Posterior vena cava (tissue), 2 donors: ENCODE measurements at regions of chr3 and their contacts with region 1.

Region 1: DNA sequence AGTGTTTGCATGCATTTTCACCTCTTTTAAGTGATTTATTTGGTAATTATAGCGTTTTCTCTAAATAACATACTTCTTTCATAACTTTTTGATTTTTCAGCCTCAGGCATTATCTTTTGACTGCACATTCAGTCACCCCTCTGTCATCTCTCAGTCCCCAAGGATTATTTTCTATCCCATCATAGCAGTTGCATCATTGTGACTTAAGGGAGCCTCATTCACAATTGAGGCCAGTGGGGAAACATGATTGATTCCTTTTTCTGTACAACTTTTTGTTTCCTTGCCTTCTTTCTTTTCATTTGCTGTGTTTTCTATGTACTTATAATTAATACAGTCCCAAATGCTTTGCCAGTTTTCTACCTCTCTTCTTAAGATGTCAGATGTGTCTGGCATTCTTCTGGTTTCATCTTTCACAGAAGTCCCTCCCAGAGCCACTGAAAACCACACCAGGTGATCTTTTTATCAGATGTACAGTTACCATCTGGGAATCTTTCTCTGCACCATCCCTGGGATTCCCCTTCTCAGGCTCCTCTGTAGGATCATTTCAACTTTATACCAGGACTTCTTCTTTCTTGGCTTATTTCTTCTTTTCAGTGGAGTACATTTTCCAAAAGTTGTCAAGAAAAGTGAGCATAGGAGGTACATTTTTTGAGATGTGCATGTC is 151.4 kb downstream of the RAP2B start:
- DNase-seq: no peak

Region 2: GRCh38 chr3:153244961-153245360 is 68.5 kb before region 1 on chr3:
- intact Hi-C with region 1: loop called in 1 of 2 experiments (anchors 2 kb)
- DNase-seq: no peak